OCI-LY7 (cell line): ENCODE measurements at regions of chr10 and their contacts with region 1.

Region 1: GRCh38 chr10:61961278-61961677 is 59.8 kb downstream of the ARID5B start:
- DNase-seq: peak; percentile 99
- H3K4me3 ChIP-seq: no peak overlapping the region
- H3K27ac ChIP-seq: peak overlapping the region; percentile 97
- H3K4me1 ChIP-seq: peaks cover 98% of the 10 kb centered on the region
- CTCF ChIP-seq: no peak

Region 2: DNA sequence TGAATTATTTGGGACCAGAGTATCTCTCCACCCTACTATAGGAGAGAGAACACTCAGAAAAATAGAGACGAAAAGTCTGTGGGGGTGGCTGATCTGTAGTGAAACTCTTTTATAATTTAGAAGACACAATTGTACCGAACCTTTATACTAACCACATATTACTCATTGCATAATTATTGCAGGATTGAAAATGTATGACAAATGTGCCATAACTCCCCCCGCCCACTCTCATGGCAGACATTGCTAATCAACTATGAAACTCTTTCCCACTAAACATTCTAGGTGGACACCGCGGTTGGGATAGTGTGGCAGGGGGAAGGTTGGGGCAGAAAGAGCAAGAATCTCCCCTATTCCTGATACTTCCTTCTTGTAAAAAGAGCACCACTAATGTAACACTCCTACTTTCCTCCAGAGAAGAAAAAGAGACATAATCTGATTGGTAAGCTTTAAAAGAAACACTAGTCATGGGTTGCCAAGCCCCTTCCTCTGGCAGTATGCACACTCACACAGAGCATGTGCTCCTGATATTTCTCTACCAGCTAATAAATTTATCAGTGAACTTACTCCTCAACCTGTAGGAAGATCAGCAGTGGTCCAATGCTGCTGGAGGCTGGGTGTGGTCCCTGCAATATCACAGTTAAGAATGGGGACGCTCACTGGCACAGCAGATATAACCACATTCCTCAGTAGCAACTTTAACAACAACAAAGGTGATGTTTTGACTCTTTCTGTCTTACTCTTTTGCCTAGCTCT is 78.5 kb before region 1 on chr10:
- CTCF ChIA-PET with region 1: no interaction called
- POLR2A ChIA-PET with region 1: no interaction called
- intact Hi-C with region 1: no loop called
- DNase-seq: no peak
- H3K4me3 ChIP-seq: no peak overlapping the region
- H3K27ac ChIP-seq: no peak overlapping the region
- H3K4me1 ChIP-seq: peaks cover 5% of the 10 kb centered on the region
- CTCF ChIP-seq: no peak

Region 3: GRCh38 chr10:61937631-61938351 is 23.5 kb before region 1 on chr10:
- CTCF ChIA-PET with region 1: no interaction called
- POLR2A ChIA-PET with region 1: interaction called, 10 read pairs
- intact Hi-C with region 1: loop called (anchors 2 kb)
- DNase-seq: no peak
- H3K4me3 ChIP-seq: no peak overlapping the region
- H3K27ac ChIP-seq: no peak overlapping the region
- H3K4me1 ChIP-seq: peaks cover 70% of the 10 kb centered on the region
- CTCF ChIP-seq: no peak

Region 4: DNA sequence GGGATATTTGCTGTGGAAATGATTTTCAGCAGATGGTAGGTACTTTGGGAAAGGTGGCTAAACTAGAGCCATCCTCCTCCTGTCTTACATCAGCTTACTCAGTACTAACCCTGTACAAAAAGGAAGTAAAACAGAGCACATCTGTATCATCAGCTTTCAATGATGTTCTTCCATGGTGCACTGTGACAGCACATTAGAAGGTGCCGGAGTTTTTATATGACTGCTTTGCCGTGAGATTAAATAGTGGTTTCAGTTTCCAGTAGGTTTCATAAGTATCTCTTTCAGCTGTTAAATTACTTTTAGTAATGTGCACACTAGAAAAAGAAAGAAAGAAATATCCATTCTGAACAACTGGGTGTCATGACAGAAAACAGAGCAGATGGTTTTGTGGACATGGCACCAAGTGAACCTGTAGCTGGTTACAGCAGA is 26.7 kb after region 1 on chr10:
- CTCF ChIA-PET with region 1: interaction called, 7 read pairs
- POLR2A ChIA-PET with region 1: interaction called, 222 read pairs
- intact Hi-C with region 1: loop called (anchors 1 kb)
- DNase-seq: peak; percentile 90
- H3K4me3 ChIP-seq: peak overlapping the region; percentile 55
- H3K27ac ChIP-seq: peak overlapping the region; percentile 99
- H3K4me1 ChIP-seq: peaks cover 98% of the 10 kb centered on the region
- CTCF ChIP-seq: no peak

Region 5: GRCh38 chr10:62038609-62039190 is 77.4 kb after region 1 on chr10:
- CTCF ChIA-PET with region 1: interaction called, 3 read pairs
- POLR2A ChIA-PET with region 1: interaction called, 4 read pairs
- intact Hi-C with region 1: loop called (anchors 2 kb)
- DNase-seq: peak; percentile 85
- H3K4me3 ChIP-seq: peak overlapping the region; percentile 18
- H3K27ac ChIP-seq: peak overlapping the region; percentile 56
- H3K4me1 ChIP-seq: peaks cover 80% of the 10 kb centered on the region
- CTCF ChIP-seq: peak; percentile 98

Region 6: DNA sequence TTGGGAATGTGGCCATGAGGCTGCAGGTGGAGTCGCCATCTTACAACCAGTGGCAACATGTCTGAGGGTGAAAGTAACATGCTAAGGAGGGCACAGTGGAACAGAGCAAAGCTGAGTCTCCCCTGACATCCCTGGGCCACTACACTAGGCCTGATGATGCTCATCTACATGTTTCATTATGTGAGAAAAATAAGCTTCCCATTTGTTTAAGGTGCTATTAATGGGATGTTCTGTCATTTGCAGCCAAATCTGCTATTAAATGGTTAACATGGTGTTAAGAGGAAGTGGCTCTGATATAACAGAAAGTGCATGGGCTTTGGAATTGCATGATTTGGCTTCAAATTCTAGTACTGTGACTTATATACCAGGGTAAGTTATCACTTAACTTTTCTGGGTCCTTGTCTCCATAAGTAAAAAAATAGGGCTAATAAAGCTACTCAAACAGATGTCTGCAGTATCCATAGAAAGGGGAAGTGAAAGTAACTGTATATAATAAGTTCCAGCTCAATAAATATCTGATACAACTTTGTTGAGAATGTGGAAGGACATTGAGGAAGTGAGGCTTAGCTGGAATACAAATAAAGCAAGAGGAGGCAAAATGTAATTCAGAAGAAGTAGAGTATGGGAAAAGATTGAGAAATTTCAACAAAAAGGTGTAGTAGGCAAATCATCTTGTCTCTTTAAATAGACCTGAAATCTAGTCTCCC is 148.5 kb after region 1 on chr10:
- CTCF ChIA-PET with region 1: no interaction called
- POLR2A ChIA-PET with region 1: no interaction called
- intact Hi-C with region 1: loop called (anchors 5 kb)
- DNase-seq: peak; percentile 89
- H3K4me3 ChIP-seq: peak overlapping the region; percentile 46
- H3K27ac ChIP-seq: peak overlapping the region; percentile 90
- H3K4me1 ChIP-seq: peaks cover 59% of the 10 kb centered on the region
- CTCF ChIP-seq: no peak

Region 7: DNA sequence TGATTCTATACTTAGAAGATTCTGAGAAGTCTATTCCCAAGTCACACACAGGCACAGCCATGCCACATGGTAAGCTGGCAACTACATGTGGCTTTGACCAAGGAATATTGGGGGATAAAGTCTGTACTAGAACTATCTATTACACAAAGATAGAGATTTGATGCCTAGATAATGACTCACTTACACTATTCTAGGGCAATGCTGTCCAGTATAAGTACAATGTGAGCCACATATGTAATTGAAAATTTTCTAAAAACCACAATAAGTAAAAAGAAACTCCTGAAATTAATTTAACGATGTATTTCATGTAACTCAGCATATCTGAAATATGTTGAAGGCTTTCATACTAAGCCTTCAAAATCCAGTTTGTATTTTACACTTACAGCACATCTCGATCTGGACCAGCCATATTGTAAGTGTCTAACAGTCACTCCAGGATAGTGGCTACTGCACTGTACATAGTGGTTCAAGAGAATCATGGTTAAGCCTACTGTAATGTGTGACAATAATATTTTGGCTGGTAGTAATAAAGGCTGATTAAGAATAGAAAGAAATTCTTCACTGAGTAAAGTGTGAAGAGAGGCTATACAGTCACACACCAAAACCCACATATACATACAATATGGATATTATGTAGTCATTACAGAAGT is 244.6 kb after region 1 on chr10:
- CTCF ChIA-PET with region 1: no interaction called
- POLR2A ChIA-PET with region 1: no interaction called
- intact Hi-C with region 1: no loop called
- DNase-seq: no peak
- H3K4me3 ChIP-seq: no peak overlapping the region
- H3K27ac ChIP-seq: no peak overlapping the region
- H3K4me1 ChIP-seq: peaks cover 5% of the 10 kb centered on the region
- CTCF ChIP-seq: no peak

Region 8: GRCh38 chr10:63268798-63269503 is 1307.7 kb after region 1 on chr10:
- CTCF ChIA-PET with region 1: no interaction called
- POLR2A ChIA-PET with region 1: interaction called, 5 read pairs
- intact Hi-C with region 1: loop called (anchors 5 kb)
- DNase-seq: peak; percentile 95
- H3K4me3 ChIP-seq: peak overlapping the region; percentile 82
- H3K27ac ChIP-seq: peak overlapping the region; percentile 94
- H3K4me1 ChIP-seq: peaks cover 35% of the 10 kb centered on the region
- CTCF ChIP-seq: peak; percentile 55